ENCODE measurements at regions of chr1 and their contacts with region 1.

Region 1: GRCh38 chr1:47432071-47433036 is 5.5 kb upstream of the FOXD2 start:
- DNase-seq: peak; percentile 90
- ATAC-seq: peak; percentile 70
- H3K4me3 Mint-ChIP-seq: peak overlapping the region; percentile 62
- H3K27ac Mint-ChIP-seq: no peak overlapping the region
- H3K4me1 Mint-ChIP-seq: peaks cover 45% of the 10 kb centered on the region
- H3K27me3 Mint-ChIP-seq: peaks cover 97% of the 10 kb centered on the region
- CTCF ChIP-seq: peak; percentile 73

Region 2: GRCh38 chr1:47231301-47232186 is 200.8 kb before region 1 on chr1:
- CTCF ChIA-PET with region 1: interaction called, 10 read pairs
- POLR2A ChIA-PET with region 1: no interaction called
- DNase-seq: no peak
- ATAC-seq: peak; percentile 2
- H3K4me3 Mint-ChIP-seq: peak overlapping the region; percentile 69
- H3K27ac Mint-ChIP-seq: no peak overlapping the region
- H3K4me1 Mint-ChIP-seq: peaks cover 65% of the 10 kb centered on the region
- H3K27me3 Mint-ChIP-seq: peaks cover 100% of the 10 kb centered on the region
- CTCF ChIP-seq: no peak

Region 3: DNA sequence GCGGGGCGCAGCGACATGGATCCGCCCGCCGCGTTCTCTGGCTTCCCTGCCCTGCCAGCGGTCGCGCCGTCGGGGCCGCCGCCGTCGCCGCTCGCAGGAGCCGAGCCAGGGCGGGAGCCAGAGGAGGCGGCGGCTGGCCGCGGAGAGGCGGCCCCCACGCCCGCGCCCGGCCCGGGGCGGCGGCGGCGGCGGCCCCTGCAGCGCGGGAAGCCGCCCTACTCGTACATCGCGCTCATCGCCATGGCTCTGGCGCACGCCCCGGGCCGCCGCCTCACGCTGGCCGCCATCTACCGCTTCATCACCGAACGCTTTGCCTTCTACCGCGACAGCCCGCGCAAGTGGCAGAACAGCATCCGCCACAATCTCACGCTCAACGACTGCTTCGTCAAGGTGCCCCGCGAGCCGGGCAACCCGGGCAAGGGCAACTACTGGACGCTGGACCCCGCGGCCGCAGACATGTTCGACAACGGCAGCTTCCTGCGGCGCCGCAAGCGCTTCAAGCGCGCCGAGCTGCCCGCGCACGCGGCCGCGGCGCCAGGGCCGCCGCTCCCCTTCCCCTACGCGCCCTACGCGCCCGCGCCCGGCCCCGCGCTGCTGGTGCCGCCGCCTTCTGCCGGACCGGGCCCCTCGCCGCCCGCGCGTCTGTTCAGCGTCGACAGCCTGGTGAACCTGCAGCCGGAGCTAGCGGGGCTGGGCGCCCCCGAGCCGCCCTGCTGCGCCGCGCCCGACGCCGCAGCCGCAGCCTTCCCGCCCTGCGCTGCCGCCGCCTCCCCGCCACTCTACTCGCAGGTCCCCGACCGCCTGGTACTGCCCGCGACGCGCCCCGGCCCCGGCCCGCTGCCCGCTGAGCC is 15.8 kb before region 1 on chr1:
- CTCF ChIA-PET with region 1: interaction called, 109 read pairs
- POLR2A ChIA-PET with region 1: no interaction called
- DNase-seq: no peak
- ATAC-seq: peak; percentile 46
- H3K4me3 Mint-ChIP-seq: peak overlapping the region; percentile 68
- H3K27ac Mint-ChIP-seq: no peak overlapping the region
- H3K4me1 Mint-ChIP-seq: peaks cover 8% of the 10 kb centered on the region
- H3K27me3 Mint-ChIP-seq: peaks cover 83% of the 10 kb centered on the region
- CTCF ChIP-seq: no peak

Region 4: DNA sequence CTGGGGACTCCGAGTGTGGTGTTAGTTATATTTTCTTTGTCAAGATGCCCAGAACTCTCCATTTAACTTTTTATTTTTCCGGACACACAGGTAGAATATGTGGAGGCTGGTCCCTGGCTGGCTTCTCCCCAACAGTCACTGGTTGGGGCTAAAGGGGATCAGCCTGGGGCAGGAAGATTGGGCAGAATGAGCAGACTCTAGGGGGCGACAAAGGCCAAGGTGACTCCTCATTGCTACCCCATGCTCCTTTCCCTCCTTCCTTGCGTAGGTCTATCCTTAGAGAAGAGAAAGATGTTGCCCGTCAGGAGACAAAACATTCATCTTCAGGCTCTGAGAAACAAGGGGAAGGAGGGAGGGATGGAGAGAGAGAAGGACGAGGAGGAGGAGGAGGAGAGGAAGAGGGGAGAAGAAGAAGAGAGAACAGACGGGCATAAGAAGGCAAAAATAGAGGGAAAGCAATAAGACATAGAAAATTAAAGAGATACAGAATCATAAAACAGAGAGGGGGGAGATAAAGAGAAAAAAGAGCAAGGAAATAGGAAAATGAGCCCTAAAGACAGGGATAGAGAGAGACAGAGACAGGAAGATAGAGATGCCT is 95.4 kb after region 1 on chr1:
- CTCF ChIA-PET with region 1: interaction called, 52 read pairs
- POLR2A ChIA-PET with region 1: no interaction called
- DNase-seq: peak; percentile 74
- ATAC-seq: peak; percentile 72
- H3K4me3 Mint-ChIP-seq: no peak overlapping the region
- H3K27ac Mint-ChIP-seq: no peak overlapping the region
- H3K4me1 Mint-ChIP-seq: peaks cover 37% of the 10 kb centered on the region
- H3K27me3 Mint-ChIP-seq: peaks cover 36% of the 10 kb centered on the region
- CTCF ChIP-seq: peak; percentile 64

Region 5: DNA sequence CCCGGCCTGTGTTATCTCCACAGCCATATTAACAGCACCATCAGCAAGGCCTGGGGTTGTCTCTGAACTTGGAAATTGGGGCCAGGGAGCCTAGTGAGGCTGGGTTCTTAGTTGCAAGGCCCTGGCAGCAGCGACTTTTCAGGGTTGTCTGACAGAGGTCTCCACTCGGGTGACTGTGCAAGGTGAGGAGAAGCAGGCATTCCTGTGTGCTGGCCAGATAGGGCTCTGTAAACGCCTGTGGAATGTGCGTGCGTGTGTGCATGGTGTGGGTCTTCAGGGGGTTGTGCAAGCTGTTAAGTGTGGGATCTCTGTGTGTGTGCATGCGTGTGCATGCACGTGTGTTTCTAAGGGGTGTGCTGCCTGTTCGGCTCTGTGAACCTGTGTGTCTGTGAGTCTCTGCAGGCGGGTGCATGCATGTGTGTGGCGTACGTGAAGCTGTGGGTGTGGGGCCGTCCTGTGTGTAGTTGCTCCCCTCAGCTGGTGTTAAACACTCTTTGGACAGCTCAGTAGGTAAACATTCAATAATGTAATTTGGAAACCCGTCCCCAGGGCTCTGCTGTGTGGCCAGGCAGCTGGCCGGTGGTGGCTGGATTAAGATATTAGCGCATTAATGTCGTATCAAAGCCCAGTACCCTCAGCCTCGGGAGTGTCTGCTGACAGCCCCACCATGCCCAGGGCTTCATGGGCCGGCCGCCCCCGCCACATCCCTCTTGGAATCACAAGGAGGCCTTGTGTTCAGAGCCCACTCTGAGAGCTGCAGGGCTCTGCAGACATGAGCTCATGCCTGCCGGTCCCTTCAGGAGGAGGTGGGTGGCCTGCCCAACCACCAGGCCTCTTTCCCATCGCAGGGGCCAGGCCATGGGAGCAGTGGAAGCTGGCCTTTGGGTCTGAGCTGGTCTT is 195.4 kb after region 1 on chr1:
- CTCF ChIA-PET with region 1: interaction called, 16 read pairs
- POLR2A ChIA-PET with region 1: no interaction called
- DNase-seq: no peak
- ATAC-seq: no peak
- H3K4me3 Mint-ChIP-seq: no peak overlapping the region
- H3K27ac Mint-ChIP-seq: no peak overlapping the region
- H3K4me1 Mint-ChIP-seq: peaks cover 6% of the 10 kb centered on the region
- H3K27me3 Mint-ChIP-seq: peaks cover 9% of the 10 kb centered on the region
- CTCF ChIP-seq: no peak

Region 6: GRCh38 chr1:47809301-47810084 is 377.1 kb after region 1 on chr1:
- CTCF ChIA-PET with region 1: no interaction called
- POLR2A ChIA-PET with region 1: no interaction called
- DNase-seq: no peak
- ATAC-seq: no peak
- H3K4me3 Mint-ChIP-seq: no peak overlapping the region
- H3K27ac Mint-ChIP-seq: no peak overlapping the region; the same call in 1 of the 2 replicates
- H3K4me1 Mint-ChIP-seq: peaks cover 20% of the 10 kb centered on the region
- H3K27me3 Mint-ChIP-seq: no peaks in the 10 kb centered on the region
- CTCF ChIP-seq: no peak